IMR-90 (cell line): ENCODE measurements at regions of chr21 and their contacts with region 1.

Region 1: DNA sequence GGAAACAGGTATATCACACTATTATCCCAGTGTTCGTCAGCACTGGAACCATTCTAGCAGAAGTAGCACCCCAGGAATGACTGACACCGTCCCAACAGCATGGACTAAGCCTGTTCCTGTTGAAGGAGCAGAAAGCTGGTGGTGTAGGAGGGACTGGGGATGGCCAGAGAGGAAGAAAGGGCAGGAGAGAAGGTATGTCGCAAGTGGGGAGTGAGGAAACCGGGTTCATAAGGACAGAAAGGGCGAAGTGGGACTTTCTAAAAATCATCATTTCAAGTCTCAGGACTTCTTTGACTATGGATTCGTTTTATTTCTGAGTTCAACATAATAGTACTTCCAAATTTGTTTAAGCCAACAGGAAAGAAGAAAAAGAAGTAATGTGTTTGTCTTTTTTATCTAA is 19.7 kb upstream of the MX1 start:
- DNase-seq: no peak
- ATAC-seq: no peak
- H3K4me3 ChIP-seq: no peak overlapping the region
- H3K27ac ChIP-seq: no peak overlapping the region
- H3K4me1 ChIP-seq: no peaks in the 10 kb centered on the region
- H3K27me3 ChIP-seq: no peaks in the 10 kb centered on the region; the same call in none of the 2 replicates
- CTCF ChIP-seq: no peak
- POLR2A ChIP-seq: no peak
- RAD21 ChIP-seq: no peak

Region 2: GRCh38 chr21:41369105-41369919 is 37.0 kb before region 1 on chr21:
- CTCF ChIA-PET with region 1: no interaction called
- POLR2A ChIA-PET with region 1: interaction called, 12 read pairs
- dilution Hi-C with region 1: no loop called
- in situ Hi-C with region 1: no loop called
- intact Hi-C with region 1: no loop called
- DNase-seq: no peak
- ATAC-seq: no peak; the same call in 1 of the 2 replicates
- H3K4me3 ChIP-seq: no peak overlapping the region
- H3K27ac ChIP-seq: no peak overlapping the region
- H3K4me1 ChIP-seq: peaks cover 4% of the 10 kb centered on the region
- H3K27me3 ChIP-seq: no peaks in the 10 kb centered on the region; the same call in 1 of the 2 replicates
- CTCF ChIP-seq: no peak
- POLR2A ChIP-seq: no peak
- RAD21 ChIP-seq: no peak

Region 3: GRCh38 chr21:41511858-41512257 is 105.5 kb after region 1 on chr21:
- CTCF ChIA-PET with region 1: no interaction called
- POLR2A ChIA-PET with region 1: no interaction called
- dilution Hi-C with region 1: no loop called
- in situ Hi-C with region 1: loop called (anchors 10 kb)
- intact Hi-C with region 1: no loop called
- DNase-seq: no peak
- ATAC-seq: no peak
- H3K4me3 ChIP-seq: no peak overlapping the region
- H3K27ac ChIP-seq: no peak overlapping the region
- H3K4me1 ChIP-seq: no peaks in the 10 kb centered on the region
- H3K27me3 ChIP-seq: peaks cover 36% of the 10 kb centered on the region
- CTCF ChIP-seq: no peak
- POLR2A ChIP-seq: no peak
- RAD21 ChIP-seq: no peak